Right cardiac atrium (tissue), 5 donors: ENCODE measurements at regions of chr11 and their contacts with region 1.

Region 1: DNA sequence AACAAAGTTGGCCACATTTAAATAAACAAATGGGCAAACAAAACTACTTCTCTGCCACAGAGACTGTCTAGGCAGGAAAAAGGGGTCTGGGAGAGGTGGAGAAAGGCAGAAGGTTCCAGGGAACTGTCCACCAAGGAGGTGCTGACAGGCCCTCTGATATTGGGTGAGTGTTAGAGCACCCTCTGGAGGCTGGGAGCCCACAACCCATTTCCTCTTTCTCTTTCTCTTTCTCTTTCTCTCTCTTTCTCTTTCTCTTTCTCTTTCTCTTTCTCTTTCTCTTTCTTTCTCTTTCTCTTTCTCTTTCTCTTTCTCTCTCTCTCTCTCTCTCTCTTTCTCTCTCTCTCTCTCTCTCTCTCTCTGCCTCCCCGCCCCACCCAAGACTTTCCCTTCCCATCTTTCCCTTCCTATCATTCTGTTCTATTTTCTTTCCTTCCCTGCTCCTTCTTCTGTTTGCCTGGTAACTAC is 912.8 kb downstream of the DLG2 start:
- DNase-seq: peak; percentile 30 to 71 (median 51)
- ATAC-seq: peak in 1 of 2 donors; percentile 68
- H3K4me3 ChIP-seq: no peak overlapping the region
- H3K27ac ChIP-seq: no peak overlapping the region
- H3K4me1 ChIP-seq: no peaks in the 10 kb centered on the region
- H3K27me3 ChIP-seq: no peaks in the 10 kb centered on the region

Region 2: DNA sequence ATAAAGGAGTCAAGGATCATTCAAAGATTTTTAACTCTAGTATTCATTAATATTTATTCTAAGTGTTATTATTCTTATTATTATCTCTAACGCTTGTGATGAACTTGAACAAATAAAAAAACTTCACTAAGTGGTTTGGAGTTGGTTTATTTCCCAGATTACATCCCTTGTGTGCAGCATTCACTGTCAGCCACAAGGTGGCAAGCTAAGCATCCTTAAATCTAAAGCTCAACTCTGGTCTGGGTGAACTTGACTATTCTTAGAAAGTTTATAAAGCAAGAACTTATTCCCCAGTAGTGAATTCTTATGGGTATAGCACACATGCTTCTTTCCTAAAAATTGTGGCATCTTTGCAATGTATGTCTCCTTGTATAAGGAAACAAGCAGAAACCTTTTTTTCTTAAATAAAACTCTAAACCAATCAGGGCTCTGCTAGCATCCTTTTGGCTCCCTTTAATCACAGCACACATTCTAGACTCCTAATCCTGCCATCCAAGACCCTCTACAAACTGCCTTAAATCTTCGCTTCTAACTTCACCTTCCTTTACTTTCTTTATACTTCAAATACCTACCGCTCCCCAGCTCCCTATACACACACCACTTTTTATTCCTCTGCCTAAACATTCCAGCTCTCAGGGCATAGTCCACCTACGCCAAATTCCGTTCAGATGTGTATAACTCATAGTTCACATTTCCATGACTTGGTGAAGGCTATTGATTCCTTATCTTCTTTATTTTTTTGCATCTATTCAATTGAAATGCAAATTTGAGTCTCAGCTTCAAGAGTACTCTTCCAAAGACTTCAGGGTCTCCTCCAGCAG is 156.1 kb before region 1 on chr11:
- intact Hi-C with region 1: loop called in 3 of 4 experiments (anchors 5 to 10 kb)
- DNase-seq: peak in 2 of 3 donors; percentile 16 to 31
- ATAC-seq: peak; percentile 50 to 57
- H3K4me3 ChIP-seq: no peak overlapping the region
- H3K27ac ChIP-seq: no peak overlapping the region
- H3K4me1 ChIP-seq: no peaks in the 10 kb centered on the region
- H3K27me3 ChIP-seq: no peaks in the 10 kb centered on the region

Region 3: DNA sequence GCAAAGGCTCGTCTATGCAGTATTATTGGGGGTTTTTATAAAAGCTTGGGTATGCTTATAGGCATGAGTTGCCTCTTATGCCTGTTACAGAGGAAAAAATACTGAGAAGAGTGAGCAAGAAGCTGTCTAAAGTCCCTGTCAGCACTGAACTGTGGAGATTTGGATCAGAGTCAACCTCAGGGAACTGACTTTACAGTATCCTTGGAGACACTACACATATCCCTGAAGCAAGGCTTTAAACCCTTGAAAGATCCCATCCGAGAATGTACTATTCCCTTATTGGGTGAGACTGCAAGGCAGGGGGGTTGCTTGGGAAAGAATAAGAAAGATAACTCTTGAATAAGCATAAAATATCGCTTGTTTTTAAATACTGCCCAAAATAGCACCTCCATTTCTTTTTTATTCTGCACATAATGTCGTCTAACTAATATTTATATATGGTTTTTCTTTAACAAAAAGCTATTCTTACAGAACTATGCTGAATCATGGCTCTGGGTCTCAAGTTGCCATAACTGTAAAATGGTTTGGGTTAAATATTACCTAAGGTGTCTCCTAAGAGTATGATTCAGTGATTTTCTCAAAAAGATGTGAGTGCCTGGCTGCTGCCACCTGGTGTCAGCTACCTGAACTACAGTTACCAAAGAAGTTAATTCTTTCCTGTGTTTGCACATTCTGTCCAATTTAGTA is 150.0 kb before region 1 on chr11:
- intact Hi-C with region 1: loop called in 3 of 4 experiments (anchors 5 to 10 kb)
- DNase-seq: peak in 1 of 3 donors; percentile 39
- ATAC-seq: peak in 1 of 2 donors; percentile 11
- H3K4me3 ChIP-seq: no peak overlapping the region
- H3K27ac ChIP-seq: no peak overlapping the region
- H3K4me1 ChIP-seq: no peaks in the 10 kb centered on the region
- H3K27me3 ChIP-seq: no peaks in the 10 kb centered on the region

Region 4: DNA sequence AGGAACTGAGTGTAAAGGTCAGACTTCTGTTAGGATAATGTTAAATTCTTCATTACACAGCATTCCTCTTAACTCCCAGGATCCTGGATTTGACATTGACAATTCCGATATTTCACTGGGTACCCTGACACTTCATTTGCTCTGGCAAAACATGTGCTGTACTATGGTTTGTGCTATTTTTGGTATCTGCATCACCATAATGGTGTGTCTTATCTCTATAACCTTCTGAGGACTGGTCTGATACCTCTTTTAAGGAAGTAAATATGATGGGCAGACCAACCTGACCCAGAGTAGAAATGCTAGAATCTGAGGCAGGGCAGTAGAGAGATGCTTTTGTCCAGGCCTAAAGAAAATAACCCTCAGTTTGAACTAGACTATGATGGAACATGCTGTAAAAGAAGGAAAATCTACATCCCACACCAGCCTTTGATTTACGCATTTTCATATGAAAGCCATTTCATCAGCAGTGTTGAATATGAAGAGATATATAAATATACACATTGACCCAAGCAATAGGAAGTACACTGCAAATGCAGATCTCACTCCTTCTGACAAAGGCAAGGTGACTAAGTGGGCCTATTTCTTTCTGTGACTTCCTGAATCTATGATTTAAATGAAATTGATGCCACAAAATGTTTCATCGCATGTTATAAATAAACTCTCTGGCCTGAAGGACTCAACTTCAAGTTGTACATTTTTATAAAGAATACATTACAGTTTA is 53.9 kb before region 1 on chr11:
- intact Hi-C with region 1: no loop called
- DNase-seq: no peak
- ATAC-seq: no peak
- H3K4me3 ChIP-seq: no peak overlapping the region
- H3K27ac ChIP-seq: no peak overlapping the region
- H3K4me1 ChIP-seq: no peaks in the 10 kb centered on the region
- H3K27me3 ChIP-seq: no peaks in the 10 kb centered on the region